ENCODE measurements at regions of chr12 and their contacts with region 1.

Region 1: GRCh38 chr12:43882578-43883178 is 46.8 kb downstream of the TMEM117 start:
- DNase-seq: peak; percentile 76
- ATAC-seq: peak; percentile 97
- H3K4me3 ChIP-seq: no peak overlapping the region
- H3K27ac ChIP-seq: no peak overlapping the region
- H3K4me1 ChIP-seq: no peaks in the 10 kb centered on the region
- H3K27me3 ChIP-seq: no peaks in the 10 kb centered on the region
- CTCF ChIP-seq: peak; percentile 98
- POLR2A ChIP-seq: peak; percentile 33; the same call in 1 of the 2 replicates
- RAD21 ChIP-seq: peak; percentile 99

Region 2: GRCh38 chr12:42921741-42922504 is 960.8 kb before region 1 on chr12:
- CTCF ChIA-PET with region 1: no interaction called
- POLR2A ChIA-PET with region 1: no interaction called
- dilution Hi-C with region 1: no loop called
- in situ Hi-C with region 1: no loop called
- intact Hi-C with region 1: no loop called
- DNase-seq: peak; percentile 77
- ATAC-seq: peak; percentile 79
- H3K4me3 ChIP-seq: no peak overlapping the region
- H3K27ac ChIP-seq: no peak overlapping the region
- H3K4me1 ChIP-seq: peaks cover 4% of the 10 kb centered on the region
- H3K27me3 ChIP-seq: no peaks in the 10 kb centered on the region; the same call in 1 of the 2 replicates
- CTCF ChIP-seq: no peak
- POLR2A ChIP-seq: no peak
- RAD21 ChIP-seq: no peak

Region 3: DNA sequence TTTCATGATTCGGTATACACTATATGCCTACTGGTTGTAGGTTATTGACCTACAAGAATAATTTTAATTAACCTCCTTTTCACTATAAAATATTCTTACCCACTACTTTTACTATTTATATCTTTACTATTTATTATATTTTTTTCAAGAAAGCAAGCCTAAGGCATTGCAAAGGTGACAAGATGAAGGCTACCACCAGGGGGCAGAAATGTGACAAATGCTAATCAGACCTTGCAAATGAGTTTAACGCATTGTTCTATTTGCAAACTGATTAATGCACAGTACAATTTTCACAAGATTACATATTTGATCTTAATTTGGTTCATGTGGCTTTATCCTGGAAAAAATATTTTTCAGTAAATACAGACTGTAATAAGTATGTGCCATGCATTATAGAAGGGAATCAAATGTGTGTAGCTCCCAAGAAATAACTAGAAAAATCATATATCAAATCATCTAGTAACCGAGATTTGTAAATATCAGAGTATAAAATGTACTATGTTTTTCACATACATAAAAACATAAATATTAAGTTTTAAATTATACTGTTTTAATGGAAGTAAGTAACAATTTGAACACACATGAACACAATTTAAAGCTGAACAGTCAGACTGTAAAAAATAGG is 437.6 kb before region 1 on chr12:
- CTCF ChIA-PET with region 1: interaction called, 3 read pairs
- POLR2A ChIA-PET with region 1: no interaction called
- dilution Hi-C with region 1: no loop called
- in situ Hi-C with region 1: no loop called
- intact Hi-C with region 1: loop called (anchors 1 kb)
- DNase-seq: peak; percentile 59
- ATAC-seq: peak; percentile 48; the same call in 1 of the 2 replicates
- H3K4me3 ChIP-seq: no peak overlapping the region
- H3K27ac ChIP-seq: no peak overlapping the region
- H3K4me1 ChIP-seq: no peaks in the 10 kb centered on the region
- H3K27me3 ChIP-seq: no peaks in the 10 kb centered on the region
- CTCF ChIP-seq: peak; percentile 64
- POLR2A ChIP-seq: no peak
- RAD21 ChIP-seq: peak; percentile 51

Region 4: DNA sequence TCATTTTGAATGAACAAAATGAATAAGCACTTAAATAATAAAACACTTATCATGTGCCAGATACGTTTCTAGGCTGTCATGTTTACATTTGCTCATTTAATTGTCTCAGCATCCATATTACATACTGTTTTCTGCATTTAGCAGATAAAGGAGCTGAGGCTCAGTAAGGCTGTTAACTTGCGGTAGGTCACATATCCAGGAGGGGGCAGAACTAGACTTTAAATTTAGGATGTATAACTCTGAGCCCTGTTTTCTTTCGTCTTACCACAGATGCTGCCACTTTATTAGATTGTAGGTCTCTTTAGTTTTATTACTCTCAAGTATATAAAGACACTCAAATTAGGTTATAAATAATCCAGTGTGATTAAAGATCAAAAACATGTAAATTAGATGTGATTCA is 106.2 kb before region 1 on chr12:
- CTCF ChIA-PET with region 1: interaction called, 7 read pairs
- POLR2A ChIA-PET with region 1: no interaction called
- dilution Hi-C with region 1: no loop called
- in situ Hi-C with region 1: loop called (anchors 10 kb)
- intact Hi-C with region 1: loop called (anchors 1 kb)
- DNase-seq: peak; percentile 45
- ATAC-seq: peak; percentile 79
- H3K4me3 ChIP-seq: no peak overlapping the region
- H3K27ac ChIP-seq: no peak overlapping the region
- H3K4me1 ChIP-seq: no peaks in the 10 kb centered on the region
- H3K27me3 ChIP-seq: no peaks in the 10 kb centered on the region
- CTCF ChIP-seq: peak; percentile 46
- POLR2A ChIP-seq: no peak
- RAD21 ChIP-seq: peak; percentile 51

Region 5: GRCh38 chr12:43835656-43836474 is 46.8 kb before region 1 on chr12 and contains the start of gene TMEM117:
- CTCF ChIA-PET with region 1: no interaction called
- POLR2A ChIA-PET with region 1: no interaction called
- dilution Hi-C with region 1: no loop called
- in situ Hi-C with region 1: no loop called
- intact Hi-C with region 1: loop called (anchors 2 kb)
- DNase-seq: peak; percentile 43
- ATAC-seq: peak; percentile 82
- H3K4me3 ChIP-seq: peak within 1 kb of the TSS; percentile 61
- H3K27ac ChIP-seq: peak within 1 kb of the TSS; percentile 63
- H3K4me1 ChIP-seq: no peaks in the 10 kb centered on the region; the same call in 1 of the 2 replicates
- H3K27me3 ChIP-seq: no peaks in the 10 kb centered on the region
- CTCF ChIP-seq: no peak
- POLR2A ChIP-seq: peak; percentile 68
- RAD21 ChIP-seq: no peak
- total RNA-seq, gene TMEM117: 21.0 and 29.7 TPM in 2 replicates

Measured in IMR-90 (cell line).